Sigmoid colon (tissue), 7 donors: ENCODE measurements at regions of chr19 and their contacts with region 1.

Region 1: DNA sequence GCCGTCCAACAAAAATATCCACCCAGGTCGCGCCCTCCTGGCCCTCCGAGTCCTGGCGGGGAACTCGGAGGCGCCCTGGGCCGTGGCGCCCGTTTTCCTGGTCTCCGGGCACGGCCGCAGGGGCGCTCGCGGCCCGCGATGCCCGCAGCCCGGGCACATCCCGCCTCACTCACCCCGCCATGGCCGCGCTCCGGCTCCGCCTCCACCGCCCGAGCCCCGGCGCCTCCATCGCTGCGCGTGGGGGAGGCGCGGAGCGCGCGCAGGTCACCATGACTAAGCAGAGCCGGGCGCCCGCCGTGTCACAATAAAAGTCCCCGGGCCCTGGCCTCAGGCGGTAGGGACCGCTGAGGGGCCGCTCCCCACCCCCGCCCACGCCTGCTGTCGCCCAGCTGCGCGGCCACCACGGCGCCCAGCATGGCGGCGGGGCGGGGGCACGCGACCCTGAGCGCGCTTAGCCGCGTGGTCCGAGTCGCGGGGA is 593 bp downstream of the KEAP1 start:
- DNase-seq: peak; percentile 97
- H3K4me3 ChIP-seq: peak overlapping the region; percentile 84 to 94 (median 89)
- H3K27ac ChIP-seq: peak overlapping the region; percentile 94 to 99 (median 98)
- H3K4me1 ChIP-seq: peaks cover 0 to 54% (median 47%) of the 10 kb centered on the region in 4 donors
- H3K27me3 ChIP-seq: no peaks in the 10 kb centered on the region
- CTCF ChIP-seq: no peak
- EP300 ChIP-seq: peak in 2 of 4 donors; percentile 30 to 67
- POLR2A ChIP-seq: no peak

Region 2: GRCh38 chr19:10478903-10479384 is 23.6 kb before region 1 on chr19:
- intact Hi-C with region 1: loop called (anchors 1 kb)
- DNase-seq: peak; percentile 98
- H3K4me3 ChIP-seq: peak overlapping the region; percentile 27 to 54 (median 41)
- H3K27ac ChIP-seq: peak overlapping the region; percentile 9 to 62 (median 38)
- H3K4me1 ChIP-seq: peaks cover 0 to 15% (median 12%) of the 10 kb centered on the region in 4 donors
- H3K27me3 ChIP-seq: no peaks in the 10 kb centered on the region
- CTCF ChIP-seq: peak in 3 of 4 experiments; percentile 6 to 86 (median 16)
- EP300 ChIP-seq: no peak
- POLR2A ChIP-seq: no peak

Region 3: GRCh38 chr19:10543420-10544241 is 41.1 kb after region 1 on chr19 and contains the start of gene ATG4D:
- intact Hi-C with region 1: loop called (anchors 5 kb)
- DNase-seq: peak; percentile 85
- H3K4me3 ChIP-seq: peak within 1 kb of the TSS; percentile 74 to 97 (median 90)
- H3K27ac ChIP-seq: peak within 1 kb of the TSS; percentile 87 to 95 (median 88)
- H3K4me1 ChIP-seq: peaks cover 0 to 24% (median 21%) of the 10 kb centered on the region in 4 donors
- H3K27me3 ChIP-seq: no peaks in the 10 kb centered on the region
- CTCF ChIP-seq: no peak
- EP300 ChIP-seq: no peak
- POLR2A ChIP-seq: peak; percentile 50 to 70
- total RNA-seq, gene ATG4D: 11.4 to 25.5 (median 16.7) TPM

Region 4: GRCh38 chr19:10565567-10566407 is 63.2 kb after region 1 on chr19 and contains the start of gene KRI1:
- intact Hi-C with region 1: loop called (anchors 2 kb)
- DNase-seq: peak; percentile 99
- H3K4me3 ChIP-seq: peak within 1 kb of the TSS; percentile 61 to 95 (median 84)
- H3K27ac ChIP-seq: peak within 1 kb of the TSS; percentile 82 to 94 (median 90)
- H3K4me1 ChIP-seq: peaks cover 0 to 46% (median 39%) of the 10 kb centered on the region in 4 donors
- H3K27me3 ChIP-seq: no peaks in the 10 kb centered on the region
- CTCF ChIP-seq: peak in 1 of 4 experiments; percentile 39
- EP300 ChIP-seq: peak in 1 of 4 donors; percentile 40
- POLR2A ChIP-seq: peak; percentile 77 to 83
- total RNA-seq, gene KRI1: 13.6 to 21.1 (median 16.1) TPM

Region 5: GRCh38 chr19:10653715-10654492 is 151.3 kb after region 1 on chr19 and contains the start of gene ILF3:
- intact Hi-C with region 1: loop called (anchors 2 kb)
- DNase-seq: peak; percentile 100
- H3K4me3 ChIP-seq: peak within 1 kb of the TSS; percentile 72 to 100 (median 100)
- H3K27ac ChIP-seq: peak within 1 kb of the TSS; percentile 95 to 100 (median 100)
- H3K4me1 ChIP-seq: peaks cover 0 to 51% (median 44%) of the 10 kb centered on the region in 4 donors
- H3K27me3 ChIP-seq: no peaks in the 10 kb centered on the region
- CTCF ChIP-seq: no peak
- EP300 ChIP-seq: peak in 2 of 4 donors; percentile 55 to 94
- POLR2A ChIP-seq: peak; percentile 98 to 99
- total RNA-seq, gene ILF3: 83.5 to 109 (median 94.8) TPM